Endothelial cell of umbilical vein (primary cell): ENCODE measurements at regions of chr11 and their contacts with region 1.

Region 1: GRCh38 chr11:130861902-130862860 is 54.1 kb downstream of the SNX19 start:
- DNase-seq: peak; percentile 84
- H3K4me3 ChIP-seq: no peak overlapping the region
- H3K27ac ChIP-seq: no peak overlapping the region
- H3K4me1 ChIP-seq: no peaks in the 10 kb centered on the region
- H3K27me3 ChIP-seq: no peaks in the 10 kb centered on the region
- CTCF ChIP-seq: peak; percentile 100
- POLR2A ChIP-seq: no peak

Region 2: DNA sequence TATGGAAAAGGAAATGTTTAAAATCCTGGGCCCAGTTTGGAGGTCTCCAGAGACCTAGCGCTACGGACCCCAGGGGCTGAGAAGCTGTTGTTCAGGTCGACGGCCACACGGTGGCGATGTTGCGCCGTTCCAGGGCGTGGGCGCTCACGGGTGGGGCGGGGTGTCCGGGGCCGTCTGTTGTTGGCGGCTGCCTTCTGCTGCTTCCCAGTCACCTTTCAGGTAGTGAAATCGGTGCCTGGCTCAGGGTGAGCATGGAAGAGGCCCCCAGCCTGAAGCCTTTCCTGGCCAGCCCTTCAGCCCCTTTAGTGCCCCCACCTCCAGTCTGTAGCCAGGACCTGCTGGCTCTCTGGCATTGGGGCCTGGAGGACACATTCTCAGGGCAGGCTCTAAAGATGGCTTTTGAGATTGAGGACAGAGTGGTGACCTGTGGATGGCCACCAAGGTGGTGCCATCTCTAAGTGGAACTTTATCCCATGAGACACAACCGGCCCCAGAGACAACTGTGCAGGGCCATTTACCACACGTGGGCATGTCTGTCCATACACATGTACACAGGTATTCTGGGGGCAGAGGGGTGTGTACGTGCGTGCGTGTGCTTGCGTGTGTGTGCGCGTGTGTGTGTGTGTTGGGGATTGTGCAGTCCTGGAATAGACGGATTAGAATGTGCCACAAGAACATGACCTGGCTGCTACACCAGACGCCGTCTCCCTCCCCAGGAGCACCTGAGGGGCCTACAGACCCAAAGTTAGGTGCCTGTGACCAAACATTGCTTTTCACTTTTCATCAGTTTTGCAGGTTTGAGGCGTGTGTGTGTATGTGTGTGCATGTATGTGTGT is 648.8 kb before region 1 on chr11:
- CTCF ChIA-PET with region 1: interaction called, 17 read pairs
- POLR2A ChIA-PET with region 1: no interaction called
- dilution Hi-C with region 1: no loop called
- intact Hi-C with region 1: loop called (anchors 1 kb)
- DNase-seq: peak; percentile 40
- H3K4me3 ChIP-seq: no peak overlapping the region
- H3K27ac ChIP-seq: no peak overlapping the region
- H3K4me1 ChIP-seq: no peaks in the 10 kb centered on the region
- H3K27me3 ChIP-seq: peaks cover 3 to 12% of the 10 kb centered on the region in 2 experiments
- CTCF ChIP-seq: peak; percentile 68 to 95
- POLR2A ChIP-seq: no peak

Region 3: GRCh38 chr11:130454491-130455252 is 407.5 kb before region 1 on chr11:
- CTCF ChIA-PET with region 1: interaction called, 14 read pairs
- POLR2A ChIA-PET with region 1: no interaction called
- dilution Hi-C with region 1: loop called (anchors 25 kb)
- intact Hi-C with region 1: no loop called
- DNase-seq: no peak
- H3K4me3 ChIP-seq: no peak overlapping the region
- H3K27ac ChIP-seq: no peak overlapping the region
- H3K4me1 ChIP-seq: no peaks in the 10 kb centered on the region
- H3K27me3 ChIP-seq: peaks cover 19 to 26% of the 10 kb centered on the region in 2 experiments
- CTCF ChIP-seq: no peak
- POLR2A ChIP-seq: no peak

Region 4: GRCh38 chr11:130827451-130828377 is 34.5 kb before region 1 on chr11:
- CTCF ChIA-PET with region 1: interaction called, 10 read pairs
- POLR2A ChIA-PET with region 1: no interaction called
- dilution Hi-C with region 1: no loop called
- intact Hi-C with region 1: loop called (anchors 1 kb)
- DNase-seq: peak; percentile 65
- H3K4me3 ChIP-seq: no peak overlapping the region
- H3K27ac ChIP-seq: no peak overlapping the region
- H3K4me1 ChIP-seq: no peaks in the 10 kb centered on the region
- H3K27me3 ChIP-seq: no peaks in the 10 kb centered on the region
- CTCF ChIP-seq: peak; percentile 41 to 69
- POLR2A ChIP-seq: no peak

Region 5: GRCh38 chr11:130894322-130895025 is 32.3 kb after region 1 on chr11:
- CTCF ChIA-PET with region 1: interaction called, 110 read pairs
- POLR2A ChIA-PET with region 1: no interaction called
- dilution Hi-C with region 1: no loop called
- intact Hi-C with region 1: loop called (anchors 1 kb)
- DNase-seq: peak; percentile 90
- H3K4me3 ChIP-seq: no peak overlapping the region
- H3K27ac ChIP-seq: peak overlapping the region; percentile 13
- H3K4me1 ChIP-seq: peaks cover 57% of the 10 kb centered on the region
- H3K27me3 ChIP-seq: no peaks in the 10 kb centered on the region
- CTCF ChIP-seq: peak; percentile 72 to 86
- POLR2A ChIP-seq: no peak